WTC11 (cell line): ENCODE measurements at regions of chr17 and their contacts with region 1.

Region 1: GRCh38 chr17:1908699-1909309 is 79.0 kb downstream of the RPA1 start:
- DNase-seq: peak; percentile 69
- ATAC-seq: peak; percentile 87
- H3K4me3 Mint-ChIP-seq: peak overlapping the region; percentile 63
- H3K27ac Mint-ChIP-seq: no peak overlapping the region
- H3K4me1 Mint-ChIP-seq: peaks cover 2% of the 10 kb centered on the region
- H3K27me3 Mint-ChIP-seq: peaks cover 98% of the 10 kb centered on the region
- CTCF ChIP-seq: peak; percentile 40; the same call in 1 of the 2 replicates

Region 2: GRCh38 chr17:1764284-1764683 is 144.5 kb before region 1 on chr17:
- CTCF ChIA-PET with region 1: no interaction called
- POLR2A ChIA-PET with region 1: no interaction called
- DNase-seq: no peak
- ATAC-seq: no peak
- H3K4me3 Mint-ChIP-seq: no peak overlapping the region
- H3K27ac Mint-ChIP-seq: no peak overlapping the region
- H3K4me1 Mint-ChIP-seq: peaks cover 22% of the 10 kb centered on the region
- H3K27me3 Mint-ChIP-seq: no peaks in the 10 kb centered on the region
- CTCF ChIP-seq: no peak

Region 3: GRCh38 chr17:1919201-1919600 is 10.4 kb after region 1 on chr17:
- CTCF ChIA-PET with region 1: interaction called, 15 read pairs
- POLR2A ChIA-PET with region 1: no interaction called
- DNase-seq: no peak
- ATAC-seq: no peak
- H3K4me3 Mint-ChIP-seq: no peak overlapping the region
- H3K27ac Mint-ChIP-seq: no peak overlapping the region
- H3K4me1 Mint-ChIP-seq: peaks cover 3% of the 10 kb centered on the region
- H3K27me3 Mint-ChIP-seq: peaks cover 22% of the 10 kb centered on the region
- CTCF ChIP-seq: no peak

Region 4: DNA sequence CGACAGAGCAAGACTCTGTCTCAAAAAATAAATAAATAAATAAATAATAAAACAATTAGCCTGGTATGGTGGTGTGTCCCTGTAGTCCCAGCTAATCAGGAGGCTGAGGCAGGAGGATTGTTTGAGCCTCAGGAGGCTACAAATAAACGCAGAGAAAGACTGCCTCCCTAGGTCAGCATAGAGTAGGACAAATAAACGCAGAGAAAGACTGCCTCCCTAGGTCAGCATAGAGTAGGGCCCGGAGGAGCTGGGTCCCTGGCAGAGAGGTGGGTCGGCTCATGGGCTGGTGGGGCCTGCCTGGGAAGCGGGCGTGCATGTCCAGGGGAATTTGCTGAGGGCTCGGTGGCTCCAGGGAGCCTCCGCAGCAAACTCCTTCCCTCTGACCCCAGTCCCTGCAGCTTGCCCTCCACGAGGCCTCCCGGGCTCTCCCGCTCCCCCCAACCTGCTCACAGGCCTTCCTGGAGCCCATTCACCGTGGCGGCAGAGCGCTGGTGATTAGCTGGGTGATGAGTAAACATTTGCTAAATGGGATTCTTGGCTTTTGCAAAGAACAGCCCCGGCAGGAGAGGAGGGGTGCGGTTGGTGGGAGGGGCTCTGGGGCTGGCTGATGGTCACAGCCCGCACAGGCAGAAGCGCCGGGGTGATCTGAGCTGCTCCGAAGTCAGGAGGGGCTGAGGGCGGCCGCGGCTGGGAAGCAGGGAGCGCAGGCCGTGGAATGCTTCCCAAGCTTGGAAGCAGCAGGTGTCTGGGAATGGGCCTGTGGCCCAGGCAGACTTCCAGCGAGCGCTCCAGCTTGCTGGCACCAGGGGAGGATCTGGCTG is 23.2 kb after region 1 on chr17:
- CTCF ChIA-PET with region 1: interaction called, 15 read pairs
- POLR2A ChIA-PET with region 1: no interaction called
- DNase-seq: peak; percentile 73
- ATAC-seq: peak; percentile 91
- H3K4me3 Mint-ChIP-seq: peak overlapping the region; percentile 47
- H3K27ac Mint-ChIP-seq: no peak overlapping the region
- H3K4me1 Mint-ChIP-seq: 0 out of 2 replicates have a peak, but pooled peaks cover 2% of the 10 kb centered on the region
- H3K27me3 Mint-ChIP-seq: peaks cover 16% of the 10 kb centered on the region
- CTCF ChIP-seq: no peak

Region 5: GRCh38 chr17:1999557-2000251 is 90.9 kb after region 1 on chr17:
- CTCF ChIA-PET with region 1: interaction called, 13 read pairs
- POLR2A ChIA-PET with region 1: interaction called, 3 read pairs
- DNase-seq: peak; percentile 38
- ATAC-seq: peak; percentile 15
- H3K4me3 Mint-ChIP-seq: peak overlapping the region; percentile 59
- H3K27ac Mint-ChIP-seq: no peak overlapping the region
- H3K4me1 Mint-ChIP-seq: peaks cover 33% of the 10 kb centered on the region
- H3K27me3 Mint-ChIP-seq: peaks cover 30% of the 10 kb centered on the region
- CTCF ChIP-seq: no peak

Region 6: GRCh38 chr17:2011411-2012371 is 102.9 kb after region 1 on chr17:
- CTCF ChIA-PET with region 1: interaction called, 10 read pairs
- POLR2A ChIA-PET with region 1: no interaction called
- DNase-seq: no peak
- ATAC-seq: peak; percentile 79
- H3K4me3 Mint-ChIP-seq: peak overlapping the region; percentile 33; the same call in 1 of the 2 replicates
- H3K27ac Mint-ChIP-seq: no peak overlapping the region
- H3K4me1 Mint-ChIP-seq: peaks cover 20% of the 10 kb centered on the region
- H3K27me3 Mint-ChIP-seq: peaks cover 32% of the 10 kb centered on the region
- CTCF ChIP-seq: no peak

Region 7: DNA sequence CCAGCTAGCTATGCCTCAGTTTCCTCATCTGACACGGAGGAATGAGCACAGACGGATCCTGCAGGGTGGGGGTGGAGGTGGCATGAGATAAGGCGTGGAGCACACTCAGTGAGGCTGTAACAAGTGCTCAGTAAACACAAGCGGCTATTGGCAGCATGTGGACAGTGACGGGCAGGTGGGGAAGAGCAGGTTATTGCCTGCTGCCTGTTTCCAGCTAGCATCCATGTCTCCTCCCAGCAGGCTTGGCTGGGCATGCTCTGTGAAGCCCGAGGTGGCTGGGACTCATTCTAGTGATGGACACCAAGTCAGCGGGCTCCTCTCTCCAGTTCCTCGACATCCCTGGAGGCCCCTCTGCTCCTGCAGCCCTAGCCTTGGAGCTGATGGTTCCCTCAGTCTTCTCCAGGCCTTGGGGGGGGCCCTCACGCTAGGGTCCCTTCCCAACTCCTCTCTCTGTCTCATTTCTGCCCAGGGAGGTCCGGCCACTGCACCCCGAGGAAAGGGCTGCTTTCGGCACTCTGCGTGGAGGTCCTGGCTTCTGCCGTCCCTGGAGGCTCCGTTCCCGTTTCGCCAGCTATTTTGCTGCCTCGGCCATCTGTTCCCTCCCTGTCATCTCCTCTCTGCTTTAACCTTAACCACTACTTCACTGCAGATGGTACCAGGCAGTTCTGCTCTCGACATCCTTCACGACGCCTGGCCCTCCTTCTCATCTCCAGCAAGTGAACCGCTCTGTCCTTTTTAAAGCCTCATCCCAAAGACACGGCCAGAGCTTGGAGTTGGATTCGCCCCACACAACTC is 110.1 kb after region 1 on chr17:
- CTCF ChIA-PET with region 1: interaction called, 47 read pairs
- POLR2A ChIA-PET with region 1: no interaction called
- DNase-seq: no peak
- ATAC-seq: no peak
- H3K4me3 Mint-ChIP-seq: no peak overlapping the region
- H3K27ac Mint-ChIP-seq: no peak overlapping the region
- H3K4me1 Mint-ChIP-seq: peaks cover 3% of the 10 kb centered on the region; the same call in 1 of the 2 replicates
- H3K27me3 Mint-ChIP-seq: peaks cover 81% of the 10 kb centered on the region
- CTCF ChIP-seq: no peak

Region 8: GRCh38 chr17:2025622-2026310 is 117.0 kb after region 1 on chr17:
- CTCF ChIA-PET with region 1: interaction called, 47 read pairs
- POLR2A ChIA-PET with region 1: interaction called, 3 read pairs
- DNase-seq: peak; percentile 62
- ATAC-seq: no peak
- H3K4me3 Mint-ChIP-seq: peak overlapping the region; percentile 67
- H3K27ac Mint-ChIP-seq: no peak overlapping the region
- H3K4me1 Mint-ChIP-seq: peaks cover 4% of the 10 kb centered on the region
- H3K27me3 Mint-ChIP-seq: peaks cover 85% of the 10 kb centered on the region
- CTCF ChIP-seq: no peak